ENCODE measurements at regions of chr13 and their contacts with region 1.

Region 1: GRCh38 chr13:102845630-102846260 is at the start of gene ERCC5:
- DNase-seq: peak; percentile 91 to 98 (median 95)
- ATAC-seq: peak; percentile 69
- H3K4me3 ChIP-seq: peak within 1 kb of the TSS; percentile 98
- H3K4me3 Mint-ChIP-seq: peak within 1 kb of the TSS; percentile 100
- H3K27ac ChIP-seq: peak within 1 kb of the TSS; percentile 97 to 99
- H3K27ac Mint-ChIP-seq: peak within 1 kb of the TSS; percentile 100
- H3K4me1 ChIP-seq: peaks cover 31% of the 10 kb centered on the region
- H3K4me1 Mint-ChIP-seq: peaks cover 52% of the 10 kb centered on the region
- H3K27me3 ChIP-seq: no peaks in the 10 kb centered on the region
- H3K27me3 Mint-ChIP-seq: no peaks in the 10 kb centered on the region
- CTCF ChIP-seq: peak; percentile 12
- total RNA-seq, gene ERCC5: 129 to 136 TPM

Region 2: GRCh38 chr13:102580552-102581169 is 265.1 kb before region 1 on chr13:
- CTCF ChIA-PET with region 1: interaction called, 4 read pairs
- POLR2A ChIA-PET with region 1: interaction called, 15 read pairs
- intact Hi-C with region 1: loop called (anchors 1 kb)
- DNase-seq: peak in 6 of 14 experiments; percentile 11 to 83 (median 64)
- ATAC-seq: peak; percentile 85
- H3K4me3 ChIP-seq: no peak overlapping the region
- H3K4me3 Mint-ChIP-seq: no peak overlapping the region
- H3K27ac ChIP-seq: no peak overlapping the region
- H3K27ac Mint-ChIP-seq: no peak overlapping the region
- H3K4me1 ChIP-seq: peaks cover 4% of the 10 kb centered on the region
- H3K4me1 Mint-ChIP-seq: peaks cover 8% of the 10 kb centered on the region
- H3K27me3 ChIP-seq: no peaks in the 10 kb centered on the region
- H3K27me3 Mint-ChIP-seq: peaks cover 4% of the 10 kb centered on the region
- CTCF ChIP-seq: peak; percentile 88

Region 3: DNA sequence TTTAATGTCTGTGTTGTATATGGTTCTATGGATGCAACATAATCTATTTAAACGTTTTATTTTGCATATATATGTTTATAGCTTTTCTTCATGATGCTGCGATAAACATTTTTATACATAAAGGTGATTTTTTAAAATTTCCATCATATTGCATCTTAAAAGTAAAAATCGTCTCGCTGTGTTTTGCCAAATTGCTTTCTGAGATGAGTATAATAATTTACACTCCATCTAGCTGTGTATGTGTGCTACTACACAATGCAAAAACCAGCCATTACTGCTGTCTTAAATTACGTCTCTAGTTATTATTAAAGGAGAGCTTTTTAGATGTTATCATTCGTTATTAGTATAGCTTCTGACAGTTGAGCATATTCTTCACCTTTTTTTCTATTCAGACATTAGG is 188.1 kb before region 1 on chr13:
- CTCF ChIA-PET with region 1: no interaction called
- POLR2A ChIA-PET with region 1: interaction called, 3 read pairs
- intact Hi-C with region 1: loop called in 1 of 2 experiments (anchors 5 kb)
- DNase-seq: peak in 2 of 14 experiments; percentile 9
- ATAC-seq: no peak
- H3K4me3 ChIP-seq: no peak overlapping the region
- H3K4me3 Mint-ChIP-seq: no peak overlapping the region
- H3K27ac ChIP-seq: no peak overlapping the region
- H3K27ac Mint-ChIP-seq: no peak overlapping the region
- H3K4me1 ChIP-seq: no peaks in the 10 kb centered on the region
- H3K4me1 Mint-ChIP-seq: peaks cover 4% of the 10 kb centered on the region
- H3K27me3 ChIP-seq: no peaks in the 10 kb centered on the region
- H3K27me3 Mint-ChIP-seq: no peaks in the 10 kb centered on the region
- CTCF ChIP-seq: peak; percentile 13

Region 4: GRCh38 chr13:102724923-102725322 is 120.8 kb before region 1 on chr13:
- CTCF ChIA-PET with region 1: no interaction called
- POLR2A ChIA-PET with region 1: interaction called, 3 read pairs
- intact Hi-C with region 1: loop called in 1 of 2 experiments (anchors 5 kb)
- DNase-seq: peak in 4 of 14 experiments; percentile 6 to 21 (median 16)
- ATAC-seq: no peak
- H3K4me3 ChIP-seq: no peak overlapping the region
- H3K4me3 Mint-ChIP-seq: no peak overlapping the region
- H3K27ac ChIP-seq: no peak overlapping the region
- H3K27ac Mint-ChIP-seq: no peak overlapping the region
- H3K4me1 ChIP-seq: no peaks in the 10 kb centered on the region
- H3K4me1 Mint-ChIP-seq: no peaks in the 10 kb centered on the region
- H3K27me3 ChIP-seq: no peaks in the 10 kb centered on the region
- H3K27me3 Mint-ChIP-seq: peaks cover 4% of the 10 kb centered on the region
- CTCF ChIP-seq: no peak

Region 5: GRCh38 chr13:102800145-102801041 is 45.4 kb before region 1 on chr13:
- CTCF ChIA-PET with region 1: interaction called, 18 read pairs
- POLR2A ChIA-PET with region 1: interaction called, 35 read pairs
- intact Hi-C with region 1: loop called (anchors 1 to 2 kb)
- DNase-seq: peak; percentile 58 to 90 (median 75)
- ATAC-seq: peak; percentile 76
- H3K4me3 ChIP-seq: peak overlapping the region; percentile 77
- H3K4me3 Mint-ChIP-seq: peak overlapping the region; percentile 94
- H3K27ac ChIP-seq: no peak overlapping the region
- H3K27ac Mint-ChIP-seq: peak overlapping the region; percentile 66
- H3K4me1 ChIP-seq: peaks cover 31% of the 10 kb centered on the region
- H3K4me1 Mint-ChIP-seq: peaks cover 29% of the 10 kb centered on the region
- H3K27me3 ChIP-seq: peaks cover 6 to 18% of the 10 kb centered on the region in 2 experiments
- H3K27me3 Mint-ChIP-seq: peaks cover 28% of the 10 kb centered on the region
- CTCF ChIP-seq: peak; percentile 69

Region 6: DNA sequence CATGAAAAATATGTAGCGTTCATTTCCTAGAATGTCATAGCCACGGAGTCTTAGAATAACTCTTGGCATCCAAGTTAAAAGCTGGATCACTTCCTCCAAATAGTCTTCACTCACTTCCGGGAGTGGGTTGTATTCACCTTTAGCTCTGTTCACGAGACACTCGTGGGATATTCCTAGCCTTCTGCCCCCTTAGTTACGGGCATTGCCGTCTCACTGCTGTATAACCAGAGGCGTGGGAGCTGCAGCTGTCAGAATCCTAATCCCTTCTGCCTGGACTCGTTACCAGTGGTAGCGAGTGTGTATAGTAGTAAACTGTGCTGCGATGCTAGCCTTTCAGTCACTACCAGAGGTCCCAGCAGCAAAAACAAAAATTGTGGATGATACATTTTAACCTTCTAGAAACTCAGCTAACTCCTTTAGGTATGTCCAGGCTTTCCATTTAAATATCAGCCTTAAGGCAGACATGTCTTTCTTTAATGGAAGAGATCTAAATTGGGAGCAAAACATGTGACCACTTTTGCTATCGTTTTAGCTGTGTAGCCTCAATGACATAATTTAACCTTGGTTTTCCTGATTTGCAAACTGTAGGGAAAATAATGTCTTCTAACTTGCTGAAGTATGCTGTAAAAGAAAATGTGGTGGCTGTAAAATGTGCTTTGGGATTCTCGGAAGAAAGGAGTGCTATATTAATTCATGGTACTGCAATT is 34.2 kb after region 1 on chr13:
- CTCF ChIA-PET with region 1: no interaction called
- POLR2A ChIA-PET with region 1: no interaction called
- intact Hi-C with region 1: no loop called
- DNase-seq: no peak
- ATAC-seq: no peak
- H3K4me3 ChIP-seq: no peak overlapping the region
- H3K4me3 Mint-ChIP-seq: no peak overlapping the region
- H3K27ac ChIP-seq: no peak overlapping the region
- H3K27ac Mint-ChIP-seq: no peak overlapping the region
- H3K4me1 ChIP-seq: no peaks in the 10 kb centered on the region
- H3K4me1 Mint-ChIP-seq: no peaks in the 10 kb centered on the region
- H3K27me3 ChIP-seq: no peaks in the 10 kb centered on the region
- H3K27me3 Mint-ChIP-seq: no peaks in the 10 kb centered on the region
- CTCF ChIP-seq: no peak

Region 7: GRCh38 chr13:102892503-102892902 is 46.8 kb after region 1 on chr13:
- CTCF ChIA-PET with region 1: no interaction called
- POLR2A ChIA-PET with region 1: no interaction called
- intact Hi-C with region 1: no loop called
- DNase-seq: no peak
- ATAC-seq: no peak
- H3K4me3 ChIP-seq: no peak overlapping the region
- H3K4me3 Mint-ChIP-seq: no peak overlapping the region
- H3K27ac ChIP-seq: no peak overlapping the region
- H3K27ac Mint-ChIP-seq: no peak overlapping the region
- H3K4me1 ChIP-seq: no peaks in the 10 kb centered on the region
- H3K4me1 Mint-ChIP-seq: no peaks in the 10 kb centered on the region
- H3K27me3 ChIP-seq: no peaks in the 10 kb centered on the region
- H3K27me3 Mint-ChIP-seq: no peaks in the 10 kb centered on the region
- CTCF ChIP-seq: no peak

Region 8: DNA sequence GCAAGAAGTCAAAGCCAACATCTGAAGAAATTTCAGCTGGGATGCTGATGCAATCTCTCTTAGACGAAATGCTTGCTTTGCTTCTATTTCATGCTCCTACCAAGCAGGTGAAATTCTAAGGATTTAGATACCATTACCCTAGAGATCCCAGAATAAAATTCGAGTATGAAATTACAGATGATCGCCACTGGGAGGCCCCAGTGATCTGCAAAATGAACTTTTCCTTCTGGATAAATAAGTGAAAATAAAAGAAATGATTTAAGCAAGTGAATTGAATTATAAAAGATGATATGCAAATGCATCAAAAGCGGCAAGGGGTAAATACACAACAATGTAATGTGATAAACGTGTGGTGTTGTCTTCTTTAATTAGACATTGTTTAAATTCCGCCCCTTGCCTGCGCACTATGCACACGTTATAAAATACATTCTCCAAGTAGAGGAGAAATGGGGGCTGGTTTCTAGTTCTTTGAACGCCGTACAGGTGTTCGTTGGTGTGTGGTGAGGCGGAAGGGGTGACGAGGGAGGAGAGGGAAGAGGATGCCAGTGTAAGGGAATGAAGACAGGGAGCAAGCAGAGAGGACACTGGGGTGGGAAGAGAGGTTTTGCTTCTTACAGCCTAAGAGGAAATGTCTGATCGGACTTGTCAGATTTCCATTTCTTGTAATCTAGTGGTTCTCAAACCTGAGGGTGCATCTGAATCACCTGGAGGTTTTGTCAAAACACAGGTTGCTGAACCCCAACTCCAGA is 58.1 kb after region 1 on chr13:
- CTCF ChIA-PET with region 1: no interaction called
- POLR2A ChIA-PET with region 1: no interaction called
- intact Hi-C with region 1: no loop called
- DNase-seq: no peak
- ATAC-seq: no peak
- H3K4me3 ChIP-seq: no peak overlapping the region
- H3K4me3 Mint-ChIP-seq: no peak overlapping the region
- H3K27ac ChIP-seq: no peak overlapping the region
- H3K27ac Mint-ChIP-seq: no peak overlapping the region
- H3K4me1 ChIP-seq: no peaks in the 10 kb centered on the region
- H3K4me1 Mint-ChIP-seq: no peaks in the 10 kb centered on the region
- H3K27me3 ChIP-seq: peaks cover 0 to 4% of the 10 kb centered on the region in 2 experiments
- H3K27me3 Mint-ChIP-seq: peaks cover 14% of the 10 kb centered on the region
- CTCF ChIP-seq: no peak